ENCODE measurements at regions of chr3 and their contacts with region 1.

Region 1: GRCh38 chr3:157174649-157175498 is 14.9 kb upstream of the CCNL1 start:
- DNase-seq: peak; percentile 99
- ATAC-seq: peak; percentile 95
- H3K4me3 Mint-ChIP-seq: peak overlapping the region; percentile 94
- H3K27ac Mint-ChIP-seq: peak overlapping the region; percentile 99
- H3K4me1 Mint-ChIP-seq: peaks cover 20% of the 10 kb centered on the region
- H3K27me3 Mint-ChIP-seq: no peaks in the 10 kb centered on the region

Region 2: GRCh38 chr3:156424758-156425157 is 750.1 kb before region 1 on chr3:
- CTCF ChIA-PET with region 1: no interaction called
- POLR2A ChIA-PET with region 1: no interaction called
- intact Hi-C with region 1: no loop called
- DNase-seq: no peak
- ATAC-seq: no peak
- H3K4me3 Mint-ChIP-seq: no peak overlapping the region
- H3K27ac Mint-ChIP-seq: no peak overlapping the region
- H3K4me1 Mint-ChIP-seq: no peaks in the 10 kb centered on the region
- H3K27me3 Mint-ChIP-seq: peaks cover 6% of the 10 kb centered on the region

Region 3: DNA sequence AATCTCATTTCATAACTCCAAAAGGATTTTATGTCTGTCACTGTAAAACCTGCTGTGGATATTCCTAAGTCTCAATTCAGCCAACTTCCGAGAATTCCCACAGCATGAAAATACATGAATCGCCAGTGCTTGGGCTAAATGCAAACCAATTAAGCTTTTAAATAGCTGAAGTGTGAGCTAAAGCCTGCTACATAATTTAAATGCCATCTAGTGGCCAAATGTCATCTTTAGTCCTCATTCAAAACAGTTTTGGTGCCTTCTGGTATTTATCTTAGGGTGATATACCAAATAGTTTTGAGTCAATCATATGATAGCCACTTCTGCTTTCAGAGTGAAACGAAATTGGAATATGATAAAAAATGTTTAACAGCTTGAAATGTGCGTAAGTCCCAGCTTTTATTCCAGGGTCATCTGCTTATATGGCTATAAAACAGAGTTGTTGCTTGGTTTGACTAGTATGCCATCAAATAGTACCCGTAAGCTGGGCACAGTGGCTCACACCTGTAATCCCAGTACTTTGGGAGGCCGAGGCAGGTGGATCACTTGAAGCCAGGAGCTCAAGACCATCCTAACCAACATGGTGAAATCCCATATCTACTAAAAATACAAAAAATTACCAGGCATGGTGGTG is 26.9 kb after region 1 on chr3:
- CTCF ChIA-PET with region 1: interaction called, 17 read pairs
- POLR2A ChIA-PET with region 1: no interaction called
- intact Hi-C with region 1: no loop called
- DNase-seq: no peak
- ATAC-seq: no peak
- H3K4me3 Mint-ChIP-seq: no peak overlapping the region
- H3K27ac Mint-ChIP-seq: no peak overlapping the region
- H3K4me1 Mint-ChIP-seq: no peaks in the 10 kb centered on the region
- H3K27me3 Mint-ChIP-seq: no peaks in the 10 kb centered on the region

Region 4: GRCh38 chr3:157225001-157225400 is 50.1 kb after region 1 on chr3:
- CTCF ChIA-PET with region 1: no interaction called
- POLR2A ChIA-PET with region 1: interaction called, 11 read pairs
- intact Hi-C with region 1: no loop called
- DNase-seq: no peak
- ATAC-seq: no peak
- H3K4me3 Mint-ChIP-seq: no peak overlapping the region
- H3K27ac Mint-ChIP-seq: no peak overlapping the region
- H3K4me1 Mint-ChIP-seq: peaks cover 13% of the 10 kb centered on the region
- H3K27me3 Mint-ChIP-seq: no peaks in the 10 kb centered on the region

Region 5: GRCh38 chr3:157239082-157239704 is 64.3 kb after region 1 on chr3:
- CTCF ChIA-PET with region 1: interaction called, 5 read pairs
- POLR2A ChIA-PET with region 1: interaction called, 3 read pairs
- intact Hi-C with region 1: loop called in 1 of 2 experiments (anchors 2 kb)
- DNase-seq: peak; percentile 88
- ATAC-seq: peak; percentile 100
- H3K4me3 Mint-ChIP-seq: no peak overlapping the region
- H3K27ac Mint-ChIP-seq: no peak overlapping the region
- H3K4me1 Mint-ChIP-seq: peaks cover 3% of the 10 kb centered on the region
- H3K27me3 Mint-ChIP-seq: no peaks in the 10 kb centered on the region